Activated CD4-positive, alpha-beta T cell treated with anti-CD3 and anti-CD28 coated beads for 36 hours (primary cell): ENCODE measurements at regions of chr5 and their contacts with region 1.

Region 1: GRCh38 chr5:140244525-140245025 is 58.3 kb downstream of the PFDN1 start:
- DNase-seq: peak; percentile 93
- ATAC-seq: peak; percentile 71
- H3K4me3 Mint-ChIP-seq: no peak overlapping the region
- H3K27ac Mint-ChIP-seq: no peak overlapping the region
- H3K4me1 Mint-ChIP-seq: peaks cover 27% of the 10 kb centered on the region
- H3K27me3 Mint-ChIP-seq: no peaks in the 10 kb centered on the region

Region 2: GRCh38 chr5:140261403-140262171 is 17.0 kb after region 1 on chr5:
- CTCF ChIA-PET with region 1: interaction called, 23 read pairs
- POLR2A ChIA-PET with region 1: no interaction called
- intact Hi-C with region 1: no loop called
- DNase-seq: peak; percentile 41
- ATAC-seq: peak; percentile 79
- H3K4me3 Mint-ChIP-seq: no peak overlapping the region
- H3K27ac Mint-ChIP-seq: peak overlapping the region; percentile 8
- H3K4me1 Mint-ChIP-seq: peaks cover 58% of the 10 kb centered on the region
- H3K27me3 Mint-ChIP-seq: no peaks in the 10 kb centered on the region

Region 3: DNA sequence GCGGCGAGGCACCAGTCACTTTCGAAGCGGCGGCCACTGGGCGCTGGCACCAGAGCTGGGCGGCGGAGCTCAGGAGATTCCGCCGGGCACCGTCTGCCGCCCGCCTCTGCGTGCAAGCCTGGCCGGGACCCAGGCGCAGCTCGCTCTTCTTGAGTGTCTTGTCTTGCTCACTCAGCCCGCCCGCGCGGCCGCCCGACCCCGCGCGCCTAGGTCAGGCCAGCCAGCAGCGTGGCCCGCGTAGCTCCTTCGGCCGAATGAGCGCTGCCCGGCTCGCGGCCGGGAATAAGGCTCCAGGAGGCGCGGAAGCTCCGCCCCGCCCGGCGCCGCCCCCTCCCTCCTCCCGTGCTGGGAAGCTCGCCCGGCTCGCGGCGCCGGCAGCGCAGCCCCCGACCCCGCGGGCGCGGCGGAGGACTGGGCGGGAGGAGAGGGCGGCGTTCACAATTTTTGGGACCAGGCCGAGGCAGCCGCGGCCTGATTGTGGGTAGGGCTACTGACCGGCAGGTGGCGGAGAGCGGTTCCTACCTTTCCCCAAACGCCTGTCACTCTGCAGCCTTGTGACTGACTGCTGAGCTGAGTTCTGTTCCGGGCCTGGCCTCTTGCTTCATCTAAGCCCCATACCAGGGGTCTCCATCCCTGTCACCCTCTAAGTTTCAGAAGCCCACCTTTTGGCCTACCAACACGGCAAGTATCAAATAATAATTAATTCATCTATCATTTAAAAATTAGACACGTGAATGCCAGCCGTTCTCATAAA is 102.0 kb after region 1 on chr5 and contains the start of gene HBEGF:
- CTCF ChIA-PET with region 1: interaction called, 616 read pairs
- POLR2A ChIA-PET with region 1: interaction called, 3 read pairs
- intact Hi-C with region 1: loop called (anchors 1 kb)
- DNase-seq: peak; percentile 74
- ATAC-seq: peak; percentile 46
- H3K4me3 Mint-ChIP-seq: peak within 1 kb of the TSS; percentile 80
- H3K27ac Mint-ChIP-seq: no peak within 1 kb of the TSS
- H3K4me1 Mint-ChIP-seq: peaks cover 44% of the 10 kb centered on the region
- H3K27me3 Mint-ChIP-seq: peaks cover 2% of the 10 kb centered on the region
- total RNA-seq, gene HBEGF: 11.8 to 12.5 TPM

Region 4: GRCh38 chr5:140357726-140358093 is 113.1 kb after region 1 on chr5:
- CTCF ChIA-PET with region 1: interaction called, 616 read pairs
- POLR2A ChIA-PET with region 1: interaction called, 4 read pairs
- intact Hi-C with region 1: loop called (anchors 1 kb)
- DNase-seq: peak; percentile 89
- ATAC-seq: peak; percentile 98
- H3K4me3 Mint-ChIP-seq: peak overlapping the region; percentile 48
- H3K27ac Mint-ChIP-seq: peak overlapping the region; percentile 44
- H3K4me1 Mint-ChIP-seq: peaks cover 12% of the 10 kb centered on the region
- H3K27me3 Mint-ChIP-seq: peaks cover 8% of the 10 kb centered on the region

Region 5: GRCh38 chr5:140639148-140639979 is 394.8 kb after region 1 on chr5 and contains the start of gene TMCO6:
- CTCF ChIA-PET with region 1: no interaction called
- POLR2A ChIA-PET with region 1: no interaction called
- intact Hi-C with region 1: loop called in 1 of 2 experiments (anchors 5 kb)
- DNase-seq: peak; percentile 99
- ATAC-seq: peak; percentile 94
- H3K4me3 Mint-ChIP-seq: peak within 1 kb of the TSS; percentile 93
- H3K27ac Mint-ChIP-seq: peak within 1 kb of the TSS; percentile 95
- H3K4me1 Mint-ChIP-seq: peaks cover 39% of the 10 kb centered on the region
- H3K27me3 Mint-ChIP-seq: no peaks in the 10 kb centered on the region
- total RNA-seq, gene TMCO6: 36.5 to 36.6 TPM

Region 6: DNA sequence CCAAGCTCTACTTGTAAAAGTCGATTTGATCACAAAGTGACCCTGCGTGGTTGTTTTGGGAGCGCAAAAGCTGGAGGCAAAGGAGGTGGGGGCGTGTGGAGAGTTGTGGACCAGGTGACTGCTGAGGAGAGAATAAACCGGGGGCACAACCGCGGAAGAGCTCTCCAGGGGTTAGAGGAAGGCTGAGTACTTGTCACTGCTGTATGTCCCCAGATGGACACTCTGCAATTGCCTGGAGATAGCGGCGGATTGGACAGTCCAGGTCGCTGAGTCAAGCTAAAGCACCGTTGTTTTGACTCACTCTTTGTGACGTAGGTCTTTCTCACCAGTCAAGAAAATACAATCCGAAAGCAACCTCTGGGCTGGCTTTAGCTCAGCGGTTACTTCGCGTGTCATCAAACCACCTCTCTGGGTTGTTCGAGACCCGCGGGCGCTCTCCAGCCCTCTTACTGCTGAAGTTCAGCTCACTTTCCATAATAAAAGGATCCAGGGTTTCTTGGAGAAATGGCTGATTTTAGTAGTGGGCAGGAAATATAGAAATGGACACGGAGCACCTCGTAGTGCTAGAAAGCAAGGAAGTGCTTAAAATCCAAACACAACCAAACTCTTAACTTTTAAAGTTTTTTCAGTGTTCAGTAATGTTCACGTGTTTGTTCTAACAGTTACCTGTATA is 481.4 kb after region 1 on chr5:
- CTCF ChIA-PET with region 1: interaction called, 3 read pairs
- POLR2A ChIA-PET with region 1: interaction called, 3 read pairs
- intact Hi-C with region 1: loop called in 1 of 2 experiments (anchors 5 kb)
- DNase-seq: peak; percentile 87
- ATAC-seq: peak; percentile 94
- H3K4me3 Mint-ChIP-seq: peak overlapping the region; percentile 67
- H3K27ac Mint-ChIP-seq: peak overlapping the region; percentile 45
- H3K4me1 Mint-ChIP-seq: peaks cover 11% of the 10 kb centered on the region
- H3K27me3 Mint-ChIP-seq: peaks cover 22% of the 10 kb centered on the region